CD4-positive, alpha-beta memory T cell (primary cell): ENCODE measurements at regions of chr2 and their contacts with region 1.

Region 1: DNA sequence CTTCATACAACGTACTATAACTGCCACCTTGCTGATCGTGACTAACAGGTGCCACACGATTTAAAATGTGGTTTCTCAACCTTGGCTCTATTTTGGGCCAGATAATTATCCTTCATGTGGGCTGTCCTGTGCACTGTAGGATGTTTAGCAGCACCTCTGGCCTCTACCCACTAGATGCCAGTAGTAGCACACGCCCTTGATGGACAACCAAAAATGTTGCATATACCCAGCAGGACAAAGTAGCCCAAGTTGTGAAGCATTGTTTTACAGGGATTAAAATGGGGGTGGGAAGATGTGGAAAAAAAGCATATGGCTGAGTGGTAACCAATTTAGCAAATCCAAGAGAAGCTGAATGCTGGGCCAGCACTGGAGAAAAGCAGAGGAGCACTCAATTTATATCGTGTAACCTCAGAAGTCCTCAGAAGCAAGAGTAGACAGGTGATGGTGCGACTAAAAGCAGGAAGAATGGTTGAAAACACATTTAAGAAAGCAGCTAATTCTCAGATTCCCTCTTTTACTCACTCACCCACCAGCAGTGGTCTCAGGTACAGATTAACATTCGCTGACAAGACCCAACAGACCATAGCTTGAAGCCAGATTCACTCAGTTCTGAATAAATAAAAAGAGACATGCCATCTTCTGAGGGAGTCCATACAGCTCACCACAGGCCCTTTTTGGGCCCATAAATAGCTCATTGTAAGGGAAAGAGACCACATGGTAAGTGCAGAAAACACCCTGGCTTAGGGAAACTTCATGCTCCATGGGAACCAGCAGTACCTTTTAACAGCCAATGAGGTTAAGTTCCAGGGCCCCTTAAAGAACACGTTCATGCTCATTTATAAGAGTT is 50.6 kb downstream of the RAPH1 start:
- DNase-seq: peak; percentile 52 to 62 (median 55)
- H3K4me3 ChIP-seq: no peak overlapping the region
- H3K4me3 Mint-ChIP-seq: no peak overlapping the region
- H3K27ac ChIP-seq: no peak overlapping the region
- H3K27ac Mint-ChIP-seq: peak overlapping the region in 4 of 7 donors; percentile 20 to 84 (median 48)
- H3K4me1 ChIP-seq: peaks cover 7% of the 10 kb centered on the region
- H3K4me1 Mint-ChIP-seq: peaks cover 4 to 6% (median 5%) of the 10 kb centered on the region in 4 donors
- H3K27me3 ChIP-seq: no peaks in the 10 kb centered on the region
- H3K27me3 Mint-ChIP-seq: no peaks in the 10 kb centered on the region

Region 2: GRCh38 chr2:203586696-203587095 is 102.2 kb after region 1 on chr2:
- CTCF ChIA-PET with region 1: no interaction called
- POLR2A ChIA-PET with region 1: no interaction called
- intact Hi-C with region 1: no loop called
- DNase-seq: no peak
- H3K4me3 ChIP-seq: no peak overlapping the region
- H3K4me3 Mint-ChIP-seq: no peak overlapping the region
- H3K27ac ChIP-seq: no peak overlapping the region
- H3K27ac Mint-ChIP-seq: peak overlapping the region in 1 of 7 donors; percentile 56
- H3K4me1 ChIP-seq: no peaks in the 10 kb centered on the region
- H3K4me1 Mint-ChIP-seq: peaks cover 0 to 10% (median 4%) of the 10 kb centered on the region in 4 donors
- H3K27me3 ChIP-seq: no peaks in the 10 kb centered on the region
- H3K27me3 Mint-ChIP-seq: no peaks in the 10 kb centered on the region

Region 3: GRCh38 chr2:203650860-203651613 is 166.5 kb after region 1 on chr2:
- CTCF ChIA-PET with region 1: interaction called, 3 read pairs
- POLR2A ChIA-PET with region 1: no interaction called
- intact Hi-C with region 1: loop called (anchors 1 kb)
- DNase-seq: peak in 4 of 5 donors; percentile 17 to 25 (median 20)
- H3K4me3 ChIP-seq: no peak overlapping the region
- H3K4me3 Mint-ChIP-seq: no peak overlapping the region
- H3K27ac ChIP-seq: no peak overlapping the region
- H3K27ac Mint-ChIP-seq: peak overlapping the region in 1 of 7 donors; percentile 66
- H3K4me1 ChIP-seq: no peaks in the 10 kb centered on the region
- H3K4me1 Mint-ChIP-seq: peaks cover 2 to 16% (median 8%) of the 10 kb centered on the region in 4 donors
- H3K27me3 ChIP-seq: no peaks in the 10 kb centered on the region
- H3K27me3 Mint-ChIP-seq: no peaks in the 10 kb centered on the region

Region 4: DNA sequence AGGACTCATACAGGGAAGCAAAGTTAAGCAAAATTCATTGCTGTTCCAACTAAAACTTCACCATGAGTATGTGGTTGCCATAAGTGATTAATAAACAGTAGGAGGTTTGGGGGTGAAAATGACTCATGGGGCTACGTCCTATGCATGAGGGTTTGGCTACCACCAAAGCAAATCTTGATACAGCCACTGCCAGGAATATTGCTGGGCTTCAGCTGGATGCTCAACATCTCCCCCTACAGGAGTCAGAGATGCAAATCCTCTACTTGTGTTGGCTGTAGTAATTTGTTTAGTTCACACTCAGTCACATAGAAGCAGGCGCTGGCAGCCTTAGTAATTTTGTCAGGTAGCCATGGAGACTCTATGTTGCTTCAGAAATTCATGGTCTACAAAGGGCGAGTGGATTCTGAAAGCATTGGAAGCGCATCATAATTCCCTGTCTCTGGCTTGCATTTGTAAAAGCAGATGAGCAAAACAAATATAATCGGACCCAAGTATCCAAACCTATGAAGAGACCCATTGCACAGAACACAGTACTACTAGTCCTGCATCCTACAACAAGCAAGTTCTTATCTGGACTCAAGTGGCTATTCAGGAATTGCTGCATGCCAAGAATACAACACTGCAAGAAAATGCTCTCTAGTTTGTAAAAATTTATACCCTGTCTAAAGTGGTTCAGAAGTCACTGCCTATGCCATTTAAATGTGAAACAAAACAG is 297.9 kb after region 1 on chr2:
- CTCF ChIA-PET with region 1: interaction called, 20 read pairs
- POLR2A ChIA-PET with region 1: interaction called, 3 read pairs
- intact Hi-C with region 1: loop called (anchors 1 kb)
- DNase-seq: peak; percentile 67 to 79 (median 69)
- H3K4me3 ChIP-seq: no peak overlapping the region
- H3K4me3 Mint-ChIP-seq: peak overlapping the region in 3 of 8 donors; percentile 24 to 66 (median 30)
- H3K27ac ChIP-seq: no peak overlapping the region
- H3K27ac Mint-ChIP-seq: peak overlapping the region in 6 of 7 donors; percentile 44 to 85 (median 70)
- H3K4me1 ChIP-seq: peaks cover 20% of the 10 kb centered on the region
- H3K4me1 Mint-ChIP-seq: peaks cover 31 to 55% (median 40%) of the 10 kb centered on the region in 4 donors
- H3K27me3 ChIP-seq: no peaks in the 10 kb centered on the region
- H3K27me3 Mint-ChIP-seq: no peaks in the 10 kb centered on the region

Region 5: DNA sequence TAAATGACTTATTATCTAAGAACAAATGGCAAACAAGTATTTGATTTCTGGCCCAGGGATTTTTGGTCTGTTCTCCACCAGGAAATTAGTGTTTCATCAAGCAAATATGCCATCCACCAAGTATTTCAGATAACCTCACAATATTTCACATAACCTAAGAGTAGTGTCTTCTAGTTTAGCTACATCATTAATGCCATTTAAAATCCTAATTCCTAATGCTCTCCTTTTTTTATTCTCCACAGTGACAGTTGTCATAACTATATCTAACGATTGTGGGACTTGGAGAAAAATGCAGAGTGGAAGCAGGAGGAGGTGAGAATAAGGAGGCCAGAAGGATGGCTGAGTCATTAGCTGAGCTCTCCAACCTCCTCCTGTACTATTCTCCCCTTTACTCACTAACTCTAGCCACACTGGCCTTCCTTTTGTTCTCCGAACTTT is 324.6 kb after region 1 on chr2:
- CTCF ChIA-PET with region 1: interaction called, 118 read pairs
- POLR2A ChIA-PET with region 1: interaction called, 3 read pairs
- intact Hi-C with region 1: loop called (anchors 1 kb)
- DNase-seq: no peak
- H3K4me3 ChIP-seq: no peak overlapping the region
- H3K4me3 Mint-ChIP-seq: peak overlapping the region in 2 of 8 donors; percentile 2 to 54
- H3K27ac ChIP-seq: no peak overlapping the region
- H3K27ac Mint-ChIP-seq: peak overlapping the region in 6 of 7 donors; percentile 1 to 75 (median 68)
- H3K4me1 ChIP-seq: peaks cover 76% of the 10 kb centered on the region
- H3K4me1 Mint-ChIP-seq: peaks cover 34 to 86% (median 65%) of the 10 kb centered on the region in 4 donors
- H3K27me3 ChIP-seq: no peaks in the 10 kb centered on the region
- H3K27me3 Mint-ChIP-seq: no peaks in the 10 kb centered on the region

Region 6: DNA sequence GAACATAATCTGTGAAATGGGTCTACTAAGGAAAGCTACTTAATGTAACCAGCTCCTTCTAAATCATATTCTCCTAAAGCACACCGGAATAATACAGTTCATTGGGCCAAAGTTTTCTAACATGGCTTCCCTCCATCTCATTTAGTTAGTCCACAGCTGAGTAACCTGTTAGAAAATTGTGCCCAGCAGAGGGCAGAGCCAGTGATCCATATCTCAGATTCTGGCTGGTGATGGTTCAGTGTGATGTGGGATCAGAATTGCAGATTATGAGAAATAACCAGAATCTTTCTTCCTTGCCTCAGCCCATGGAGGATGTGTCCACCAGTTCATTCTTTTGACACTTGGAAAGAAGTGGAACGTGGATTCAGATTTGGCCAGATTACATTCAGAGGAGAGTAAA is 373.7 kb after region 1 on chr2:
- CTCF ChIA-PET with region 1: interaction called, 3 read pairs
- POLR2A ChIA-PET with region 1: no interaction called
- intact Hi-C with region 1: loop called (anchors 1 kb)
- DNase-seq: peak in 1 of 5 donors; percentile 38
- H3K4me3 ChIP-seq: no peak overlapping the region
- H3K4me3 Mint-ChIP-seq: peak overlapping the region in 4 of 8 donors; percentile 2 to 47 (median 22)
- H3K27ac ChIP-seq: no peak overlapping the region
- H3K27ac Mint-ChIP-seq: peak overlapping the region in 5 of 7 donors; percentile 6 to 57 (median 36)
- H3K4me1 ChIP-seq: peaks cover 71% of the 10 kb centered on the region
- H3K4me1 Mint-ChIP-seq: peaks cover 49 to 75% (median 52%) of the 10 kb centered on the region in 4 donors
- H3K27me3 ChIP-seq: no peaks in the 10 kb centered on the region
- H3K27me3 Mint-ChIP-seq: no peaks in the 10 kb centered on the region

Region 7: DNA sequence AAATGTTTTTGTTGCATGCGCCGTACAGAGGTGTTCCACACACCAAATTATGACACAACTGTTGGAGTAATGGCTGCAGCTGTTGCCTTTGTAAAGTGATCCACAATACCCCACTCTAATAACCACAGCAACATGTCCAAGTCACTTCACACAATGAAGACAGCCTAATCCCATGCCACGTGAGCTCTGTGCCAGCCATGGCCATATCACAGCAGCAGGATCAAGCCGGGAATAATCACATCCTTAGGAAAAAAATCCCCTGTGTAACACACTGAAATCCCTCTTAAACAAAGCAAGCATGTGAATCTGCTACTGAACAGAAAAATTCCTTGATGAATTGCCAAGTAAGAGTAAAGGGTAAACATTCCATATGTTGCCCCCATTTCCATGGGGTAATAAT is 881.3 kb after region 1 on chr2:
- CTCF ChIA-PET with region 1: no interaction called
- POLR2A ChIA-PET with region 1: no interaction called
- intact Hi-C with region 1: no loop called
- DNase-seq: no peak
- H3K4me3 ChIP-seq: no peak overlapping the region
- H3K4me3 Mint-ChIP-seq: no peak overlapping the region
- H3K27ac ChIP-seq: no peak overlapping the region
- H3K27ac Mint-ChIP-seq: no peak overlapping the region
- H3K4me1 ChIP-seq: no peaks in the 10 kb centered on the region
- H3K4me1 Mint-ChIP-seq: no peaks in the 10 kb centered on the region
- H3K27me3 ChIP-seq: no peaks in the 10 kb centered on the region
- H3K27me3 Mint-ChIP-seq: peaks cover 0 to 6% of the 10 kb centered on the region in 2 donors